ENCODE measurements at regions of chr7 and their contacts with region 1.

Region 1: DNA sequence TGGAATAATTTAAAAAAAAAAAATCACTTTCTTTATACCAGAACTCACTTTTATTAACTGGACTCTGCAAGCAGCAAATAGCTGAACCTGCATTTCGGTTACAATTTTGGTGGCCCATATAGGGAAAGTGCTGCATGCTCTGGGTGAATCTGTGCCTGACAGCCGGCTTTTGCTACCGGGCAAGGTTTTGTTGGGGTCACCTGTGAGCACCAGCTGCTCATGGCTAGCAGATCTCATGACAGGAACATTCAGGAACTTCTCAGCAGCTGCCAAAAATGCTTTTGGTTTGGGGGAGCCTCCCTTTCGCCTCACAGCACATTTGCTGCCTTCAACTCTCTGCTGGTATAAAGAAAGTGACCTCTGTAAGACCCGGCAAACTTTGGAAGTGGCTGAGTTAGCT is 13.2 kb upstream of the CREB3L2 start:
- DNase-seq: no peak
- ATAC-seq: no peak
- H3K4me3 ChIP-seq: no peak overlapping the region
- H3K27ac ChIP-seq: no peak overlapping the region
- H3K4me1 ChIP-seq: no peaks in the 10 kb centered on the region
- H3K27me3 ChIP-seq: no peaks in the 10 kb centered on the region
- CTCF ChIP-seq: no peak
- POLR2A ChIP-seq: no peak

Region 2: GRCh38 chr7:137613006-137613405 is 402.1 kb before region 1 on chr7:
- intact Hi-C with region 1: loop called in 1 of 10 experiments (anchors 5 kb)
- DNase-seq: no peak
- ATAC-seq: no peak
- H3K4me3 ChIP-seq: no peak overlapping the region
- H3K27ac ChIP-seq: no peak overlapping the region
- H3K4me1 ChIP-seq: peaks cover 0 to 6% (median 0%) of the 10 kb centered on the region in 12 donors
- H3K27me3 ChIP-seq: peaks cover 0 to 3% (median 0%) of the 10 kb centered on the region in 9 donors
- CTCF ChIP-seq: no peak
- POLR2A ChIP-seq: no peak

Region 3: GRCh38 chr7:137656227-137656849 is 358.8 kb before region 1 on chr7:
- intact Hi-C with region 1: loop called in 2 of 10 experiments (anchors 5 kb)
- DNase-seq: peak; percentile 73 to 85 (median 79)
- ATAC-seq: peak; percentile 70 to 90 (median 82)
- H3K4me3 ChIP-seq: no peak overlapping the region
- H3K27ac ChIP-seq: peak overlapping the region in 4 of 12 donors; percentile 3 to 28 (median 6)
- H3K4me1 ChIP-seq: peaks cover 0 to 25% (median 10%) of the 10 kb centered on the region in 12 donors
- H3K27me3 ChIP-seq: no peaks in the 10 kb centered on the region
- CTCF ChIP-seq: peak; percentile 76 to 91 (median 86)
- POLR2A ChIP-seq: no peak

Measured in heart left ventricle (tissue), 16 donors.